ENCODE measurements at regions of chr1 and their contacts with region 1.

Region 1: DNA sequence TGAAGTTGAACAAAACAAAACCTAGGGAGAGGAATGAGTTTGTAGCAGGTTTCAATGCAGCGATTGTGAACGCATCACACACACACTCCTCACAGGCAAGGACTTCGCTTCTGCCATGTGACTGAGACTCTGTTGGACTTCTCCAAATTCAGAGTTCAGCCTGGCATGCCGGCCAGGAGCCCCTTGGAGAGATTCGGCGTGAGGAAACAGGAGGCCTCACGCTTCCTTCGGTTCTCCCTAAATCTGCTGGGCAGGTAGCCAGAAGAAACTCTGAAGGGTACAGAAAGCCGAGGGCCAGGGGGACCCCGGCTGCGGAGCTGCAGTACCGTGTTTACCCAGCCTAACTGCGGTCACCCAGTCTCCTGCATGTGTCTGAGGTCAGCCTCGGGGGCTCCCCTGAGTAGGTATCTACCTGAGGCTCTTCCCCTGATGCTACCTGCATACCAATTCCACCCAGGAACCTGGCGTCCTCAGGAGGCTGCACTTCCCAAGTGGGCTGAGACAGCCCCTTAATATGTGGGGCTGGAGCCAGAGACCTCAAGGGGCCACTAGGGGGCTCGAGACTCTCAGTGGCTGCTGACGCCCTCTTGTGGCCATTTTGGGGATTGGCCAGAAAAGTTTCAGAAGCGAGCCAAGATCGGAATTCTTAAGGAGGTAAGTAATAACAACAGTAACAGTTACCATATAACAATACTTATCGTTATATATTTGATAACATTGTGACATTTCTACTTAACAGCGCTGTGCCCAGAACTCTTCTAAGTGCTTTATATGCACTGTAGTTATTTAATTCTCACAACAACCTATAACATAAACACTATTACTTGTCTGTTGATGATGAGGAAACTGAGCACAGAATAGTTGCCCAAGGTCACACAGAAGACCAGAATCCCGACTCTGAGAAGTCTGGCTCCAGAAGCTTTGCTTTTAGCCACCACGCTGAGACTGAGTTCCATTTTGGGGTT is 2.7 kb upstream of the ANXA9 start:
- DNase-seq: peak; percentile 91 to 93
- ATAC-seq: peak; percentile 79
- H3K4me3 ChIP-seq: no peak overlapping the region
- H3K27ac ChIP-seq: peak overlapping the region; percentile 39 to 80
- H3K4me1 ChIP-seq: no peaks in the 10 kb centered on the region
- H3K27me3 ChIP-seq: no peaks in the 10 kb centered on the region

Region 2: GRCh38 chr1:150561974-150562445 is 417.4 kb before region 1 on chr1:
- intact Hi-C with region 1: loop called in 1 of 2 experiments (anchors 10 kb)
- DNase-seq: peak; percentile 97
- ATAC-seq: peak; percentile 91
- H3K4me3 ChIP-seq: peak overlapping the region in 1 of 2 donors; percentile 15
- H3K27ac ChIP-seq: peak overlapping the region; percentile 93 to 95
- H3K4me1 ChIP-seq: peaks cover 0 to 12% of the 10 kb centered on the region in 2 donors
- H3K27me3 ChIP-seq: no peaks in the 10 kb centered on the region

Region 3: DNA sequence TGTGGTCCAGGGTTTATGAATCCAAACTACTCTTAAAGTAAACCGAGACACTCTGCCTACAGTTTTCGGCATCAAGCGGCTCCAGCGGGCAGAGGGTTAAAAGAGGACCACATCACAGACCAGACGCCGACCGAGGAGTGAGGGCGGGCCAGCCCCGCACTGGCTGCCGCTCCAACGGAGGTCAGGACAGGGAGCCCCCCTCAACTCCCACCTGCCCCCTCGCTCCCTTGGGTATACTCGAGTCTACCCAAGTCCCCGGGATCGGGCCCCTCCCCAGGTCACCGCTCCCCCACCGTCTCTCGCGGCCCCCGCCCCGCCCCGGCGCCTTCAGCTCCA is 103.3 kb before region 1 on chr1:
- intact Hi-C with region 1: loop called in 1 of 2 experiments (anchors 5 kb)
- DNase-seq: no peak
- ATAC-seq: peak; percentile 79
- H3K4me3 ChIP-seq: peak overlapping the region; percentile 56 to 97
- H3K27ac ChIP-seq: peak overlapping the region; percentile 51 to 80
- H3K4me1 ChIP-seq: no peaks in the 10 kb centered on the region
- H3K27me3 ChIP-seq: no peaks in the 10 kb centered on the region

Region 4: GRCh38 chr1:150925816-150926741 is 53.3 kb before region 1 on chr1 and contains the start of gene SETDB1:
- intact Hi-C with region 1: loop called in 1 of 2 experiments (anchors 5 kb)
- DNase-seq: peak; percentile 97
- ATAC-seq: peak; percentile 98
- H3K4me3 ChIP-seq: peak within 1 kb of the TSS; percentile 96 to 98
- H3K27ac ChIP-seq: peak within 1 kb of the TSS in 1 of 2 donors; percentile 74
- H3K4me1 ChIP-seq: no peaks in the 10 kb centered on the region
- H3K27me3 ChIP-seq: no peaks in the 10 kb centered on the region
- total RNA-seq, gene SETDB1: 33.5 to 56.2 TPM

Region 5: DNA sequence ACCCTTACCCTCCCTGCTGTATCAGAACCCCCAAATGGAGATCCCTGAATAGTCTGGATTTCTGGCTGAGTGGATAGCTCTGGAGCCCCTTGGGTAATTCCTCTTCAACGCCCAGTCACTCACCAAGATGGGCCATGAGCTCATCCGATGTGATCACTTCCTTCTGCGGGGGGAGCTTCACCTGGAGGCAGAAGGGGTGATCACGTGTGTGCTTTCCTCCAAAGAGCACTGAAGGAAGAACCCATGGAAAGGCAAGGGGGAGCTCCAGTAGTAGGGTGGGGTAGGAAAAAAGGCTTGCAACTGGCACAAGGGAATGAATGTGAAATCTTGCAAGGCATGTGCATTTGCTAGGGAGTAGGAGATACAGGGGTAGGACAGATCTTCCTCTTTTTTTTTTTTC is 22.2 kb after region 1 on chr1:
- intact Hi-C with region 1: loop called (anchors 1 to 5 kb)
- DNase-seq: no peak
- ATAC-seq: no peak
- H3K4me3 ChIP-seq: no peak overlapping the region
- H3K27ac ChIP-seq: no peak overlapping the region
- H3K4me1 ChIP-seq: peaks cover 0 to 2% of the 10 kb centered on the region in 2 donors
- H3K27me3 ChIP-seq: no peaks in the 10 kb centered on the region

Region 6: DNA sequence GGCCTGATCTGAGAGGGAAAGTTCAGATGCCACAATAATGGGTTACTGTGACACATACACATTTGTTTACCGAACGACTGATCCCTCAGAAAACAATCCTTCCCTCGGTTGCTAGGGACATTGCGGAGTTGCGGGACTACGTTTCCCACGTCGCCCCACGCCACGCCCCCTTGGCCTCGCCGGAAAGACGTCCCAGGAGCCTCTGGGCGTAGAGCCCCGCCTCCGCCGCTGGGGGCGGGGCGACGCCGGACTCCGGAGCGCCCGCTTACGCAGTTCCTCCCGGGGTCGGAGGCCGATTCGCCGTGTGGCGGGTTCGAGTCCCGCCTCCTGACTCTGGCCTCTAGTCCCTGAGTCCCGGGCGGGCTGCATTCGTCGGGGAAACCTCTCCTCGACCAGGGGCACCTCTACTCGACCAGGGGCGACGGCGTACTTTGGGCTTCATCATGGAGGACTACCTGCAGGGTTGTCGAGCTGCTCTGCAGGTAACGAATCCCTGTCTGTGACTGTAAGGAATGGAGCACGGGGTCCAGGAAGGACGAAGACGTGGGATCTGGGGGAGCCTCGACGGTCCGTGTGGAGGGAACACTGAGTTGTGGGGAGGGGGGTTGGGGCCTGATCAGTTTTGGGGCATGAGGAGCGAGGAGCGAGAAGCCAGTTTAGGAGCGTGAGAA is 29.0 kb after region 1 on chr1 and contains the start of gene PRUNE1:
- intact Hi-C with region 1: loop called in 1 of 2 experiments (anchors 5 kb)
- DNase-seq: peak; percentile 99 to 100
- ATAC-seq: peak; percentile 97
- H3K4me3 ChIP-seq: peak within 1 kb of the TSS; percentile 27 to 42
- H3K27ac ChIP-seq: peak within 1 kb of the TSS in 1 of 2 donors; percentile 90
- H3K4me1 ChIP-seq: peaks cover 0 to 3% of the 10 kb centered on the region in 2 donors
- H3K27me3 ChIP-seq: no peaks in the 10 kb centered on the region
- total RNA-seq, gene PRUNE1: 14.8 TPM

Region 7: DNA sequence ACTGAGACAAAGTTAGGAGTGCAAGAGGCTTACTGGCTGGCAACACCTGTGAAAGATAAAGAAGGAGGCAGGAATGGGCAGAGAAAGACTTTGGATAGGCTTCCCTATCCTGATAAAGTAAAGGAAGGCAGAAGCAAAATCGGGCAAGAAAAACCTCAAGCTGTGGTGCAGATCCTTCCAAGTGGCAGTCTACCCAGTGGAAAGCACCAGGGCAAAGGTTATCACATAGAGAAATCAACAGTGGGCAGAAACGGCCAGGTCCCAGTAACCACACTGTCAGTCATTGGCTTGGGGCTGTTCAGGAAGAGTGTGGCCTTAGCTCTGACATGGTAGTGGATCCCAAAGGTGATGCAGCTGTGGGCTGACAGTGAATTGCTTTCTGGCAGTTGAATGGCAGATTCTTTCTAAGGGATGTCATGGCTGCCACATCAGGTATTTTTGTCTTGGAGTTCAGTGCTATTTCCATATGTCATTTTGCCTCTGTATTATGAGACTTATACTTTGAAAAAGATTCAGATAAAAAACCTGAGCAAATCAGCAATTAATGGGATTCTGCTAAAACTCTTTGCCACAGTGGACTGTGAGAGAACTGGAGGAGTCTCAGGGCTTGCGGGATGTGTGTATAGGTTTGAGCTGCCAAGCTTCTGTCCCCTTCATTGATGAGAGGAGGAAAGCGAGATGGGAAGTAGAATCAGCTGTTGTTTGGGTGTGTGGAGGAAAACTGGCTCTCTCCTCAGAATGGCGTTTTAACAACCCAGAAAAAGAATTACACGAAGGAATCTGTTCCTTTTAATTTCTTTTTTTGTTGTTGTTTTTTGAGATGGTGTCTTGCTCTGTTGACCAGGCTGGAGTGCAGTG is 523.8 kb after region 1 on chr1:
- intact Hi-C with region 1: no loop called
- DNase-seq: no peak
- ATAC-seq: no peak
- H3K4me3 ChIP-seq: no peak overlapping the region
- H3K27ac ChIP-seq: no peak overlapping the region
- H3K4me1 ChIP-seq: no peaks in the 10 kb centered on the region
- H3K27me3 ChIP-seq: no peaks in the 10 kb centered on the region

Measured in aorta (tissue), 5 donors.